Esophagus squamous epithelium (tissue), 5 donors: ENCODE measurements at regions of chr5 and their contacts with region 1.

Region 1: DNA sequence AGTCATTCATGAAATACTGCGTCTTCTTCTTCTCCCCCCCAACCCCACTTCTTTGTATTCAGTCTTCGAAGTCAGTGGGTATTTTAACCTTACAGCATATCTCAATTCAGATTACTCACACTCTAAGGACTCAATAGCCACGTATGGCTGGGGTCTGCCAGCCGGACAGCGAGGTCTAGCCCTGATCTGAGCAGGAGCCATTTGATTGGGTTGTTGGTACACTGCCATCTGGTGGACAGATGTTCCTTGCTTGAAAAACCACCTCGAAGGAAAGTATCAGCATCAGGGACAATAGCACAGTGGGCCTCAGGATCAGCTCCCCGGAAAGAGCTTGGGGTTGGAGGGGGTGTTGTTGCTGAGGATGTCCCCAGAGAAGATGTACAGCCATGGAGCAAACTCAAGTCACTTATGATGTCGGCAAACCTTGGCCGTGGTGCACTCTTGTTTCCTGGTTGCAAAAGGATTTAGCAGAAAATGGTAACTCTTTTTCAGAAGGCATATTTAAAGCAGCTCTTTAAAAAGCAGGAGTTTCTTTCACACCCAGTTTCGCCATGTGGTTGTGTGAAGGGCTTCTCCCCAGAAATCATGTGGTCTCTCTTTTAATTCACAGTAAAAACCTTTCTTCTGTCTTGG is 31.7 kb upstream of the KCNMB1 start:
- DNase-seq: no peak
- H3K4me3 ChIP-seq: no peak overlapping the region
- H3K27ac ChIP-seq: no peak overlapping the region
- H3K4me1 ChIP-seq: peaks cover 0 to 13% (median 0%) of the 10 kb centered on the region in 3 donors
- H3K27me3 ChIP-seq: peaks cover 0 to 4% (median 0%) of the 10 kb centered on the region in 4 donors
- CTCF ChIP-seq: peak; percentile 61 to 81 (median 72)
- POLR2A ChIP-seq: no peak

Region 2: GRCh38 chr5:170100066-170100943 is 320.6 kb before region 1 on chr5:
- intact Hi-C with region 1: loop called (anchors 10 kb)
- DNase-seq: peak; percentile 2
- H3K4me3 ChIP-seq: no peak overlapping the region
- H3K27ac ChIP-seq: no peak overlapping the region
- H3K4me1 ChIP-seq: no peaks in the 10 kb centered on the region
- H3K27me3 ChIP-seq: peaks cover 0 to 9% (median 0%) of the 10 kb centered on the region in 4 donors
- CTCF ChIP-seq: peak; percentile 59 to 69 (median 62)
- POLR2A ChIP-seq: no peak

Region 3: GRCh38 chr5:170225326-170226128 is 195.4 kb before region 1 on chr5:
- intact Hi-C with region 1: loop called (anchors 5 kb)
- DNase-seq: no peak
- H3K4me3 ChIP-seq: no peak overlapping the region
- H3K27ac ChIP-seq: no peak overlapping the region
- H3K4me1 ChIP-seq: peaks cover 0 to 32% (median 8%) of the 10 kb centered on the region in 3 donors
- H3K27me3 ChIP-seq: no peaks in the 10 kb centered on the region
- CTCF ChIP-seq: peak in 5 of 6 experiments; percentile 67 to 80 (median 78)
- POLR2A ChIP-seq: no peak